GM12878 (cell line): ENCODE measurements at regions of chr7 and their contacts with region 1.

Region 1: GRCh38 chr7:74365322-74366022 is 76.3 kb downstream of the CLIP2 start:
- DNase-seq: no peak
- ATAC-seq: peak; percentile 91
- H3K4me3 ChIP-seq: no peak overlapping the region
- H3K27ac ChIP-seq: no peak overlapping the region
- H3K4me1 ChIP-seq: no peaks in the 10 kb centered on the region
- H3K27me3 ChIP-seq: no peaks in the 10 kb centered on the region
- CTCF ChIP-seq: no peak
- EP300 ChIP-seq: no peak
- POLR2A ChIP-seq: no peak
- RAD21 ChIP-seq: no peak

Region 2: DNA sequence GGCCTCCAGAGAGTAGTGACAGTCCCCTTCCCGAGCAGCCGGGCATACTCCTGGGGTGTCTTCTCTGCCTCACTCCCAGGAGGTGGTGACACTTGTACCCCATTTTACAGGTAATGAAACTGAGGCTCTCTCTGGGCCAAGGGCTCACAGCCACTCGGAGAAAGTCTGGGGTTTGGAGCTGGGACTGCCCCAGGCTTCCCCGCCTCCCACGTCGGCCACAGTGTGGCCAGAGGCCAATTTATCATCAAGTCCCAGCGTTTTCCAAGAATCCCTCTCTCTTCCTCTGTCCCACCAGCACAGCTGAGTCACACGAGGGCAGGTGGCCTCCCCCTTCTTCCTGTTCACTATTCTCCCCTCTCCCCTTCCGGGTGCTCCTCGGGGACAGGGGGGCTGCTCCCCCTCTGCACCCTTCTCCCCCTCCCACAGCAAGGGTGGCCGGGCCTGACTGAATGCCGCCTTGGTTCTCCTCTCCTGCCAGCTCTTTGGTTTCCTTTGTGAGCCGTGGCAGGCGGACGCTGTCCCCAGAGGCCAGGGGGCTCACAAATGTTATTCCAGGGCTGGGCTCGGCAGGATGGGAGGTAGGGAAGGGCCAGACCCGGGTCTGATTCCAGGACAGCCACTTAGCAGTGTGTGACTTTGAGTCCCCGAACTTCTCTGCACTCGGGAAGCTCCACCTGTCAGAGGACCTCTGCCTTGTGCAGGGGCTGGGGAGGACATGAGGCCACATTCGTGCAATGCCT is 58.6 kb before region 1 on chr7:
- CTCF ChIA-PET with region 1: no interaction called
- POLR2A ChIA-PET with region 1: no interaction called
- RAD21 ChIA-PET with region 1: no interaction called
- SMC1A ChIA-PET with region 1: no interaction called
- in situ Hi-C with region 1: no loop called
- intact Hi-C with region 1: loop called (anchors 10 kb)
- DNase-seq: no peak
- ATAC-seq: peak; percentile 75
- H3K4me3 ChIP-seq: peak overlapping the region; percentile 57
- H3K27ac ChIP-seq: peak overlapping the region; percentile 66
- H3K4me1 ChIP-seq: peaks cover 33% of the 10 kb centered on the region
- H3K27me3 ChIP-seq: no peaks in the 10 kb centered on the region
- CTCF ChIP-seq: no peak
- EP300 ChIP-seq: no peak
- POLR2A ChIP-seq: no peak
- RAD21 ChIP-seq: no peak

Region 3: DNA sequence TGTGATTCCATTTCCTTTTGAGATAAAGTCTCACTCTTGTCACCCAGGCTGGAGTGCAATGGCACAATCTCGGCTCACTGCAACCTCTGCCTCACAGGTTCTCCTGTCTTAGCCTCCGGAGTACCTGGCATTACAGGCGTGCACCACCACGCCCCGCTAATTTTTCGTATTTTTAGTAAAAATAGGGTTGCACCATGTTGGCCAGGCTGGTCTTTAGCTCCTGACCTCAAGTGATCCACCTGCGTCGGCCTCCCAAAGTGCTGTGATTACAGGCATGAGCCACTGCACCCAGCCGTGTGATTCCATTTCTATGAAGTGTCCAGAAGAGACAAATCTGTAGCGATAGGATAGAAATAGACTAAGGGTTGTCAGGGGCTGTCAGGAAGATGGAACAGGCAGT is 15.9 kb before region 1 on chr7:
- CTCF ChIA-PET with region 1: no interaction called
- POLR2A ChIA-PET with region 1: no interaction called
- RAD21 ChIA-PET with region 1: no interaction called
- SMC1A ChIA-PET with region 1: no interaction called
- in situ Hi-C with region 1: no loop called
- intact Hi-C with region 1: no loop called
- DNase-seq: no peak
- ATAC-seq: no peak
- H3K4me3 ChIP-seq: no peak overlapping the region
- H3K27ac ChIP-seq: no peak overlapping the region
- H3K4me1 ChIP-seq: no peaks in the 10 kb centered on the region
- H3K27me3 ChIP-seq: no peaks in the 10 kb centered on the region
- CTCF ChIP-seq: no peak
- EP300 ChIP-seq: no peak
- POLR2A ChIP-seq: no peak
- RAD21 ChIP-seq: no peak

Region 4: GRCh38 chr7:74993121-74993520 is 627.6 kb after region 1 on chr7:
- CTCF ChIA-PET with region 1: no interaction called
- POLR2A ChIA-PET with region 1: no interaction called
- RAD21 ChIA-PET with region 1: no interaction called
- SMC1A ChIA-PET with region 1: no interaction called
- in situ Hi-C with region 1: no loop called
- intact Hi-C with region 1: no loop called
- DNase-seq: no peak
- ATAC-seq: no peak
- H3K4me3 ChIP-seq: no peak overlapping the region
- H3K27ac ChIP-seq: no peak overlapping the region
- H3K4me1 ChIP-seq: no peaks in the 10 kb centered on the region
- H3K27me3 ChIP-seq: no peaks in the 10 kb centered on the region
- CTCF ChIP-seq: no peak
- EP300 ChIP-seq: no peak
- POLR2A ChIP-seq: no peak
- RAD21 ChIP-seq: no peak